Activated CD4-positive, alpha-beta T cell treated with anti-CD3 and anti-CD28 coated beads for 36 hours (primary cell): ENCODE measurements at regions of chr3 and their contacts with region 1.

Region 1: GRCh38 chr3:177314897-177315296 is 117.6 kb upstream of the TBL1XR1 start:
- DNase-seq: no peak
- ATAC-seq: peak; percentile 72
- H3K4me3 Mint-ChIP-seq: no peak overlapping the region
- H3K27ac Mint-ChIP-seq: no peak overlapping the region
- H3K4me1 Mint-ChIP-seq: peaks cover 23% of the 10 kb centered on the region
- H3K27me3 Mint-ChIP-seq: peaks cover 3% of the 10 kb centered on the region

Region 2: DNA sequence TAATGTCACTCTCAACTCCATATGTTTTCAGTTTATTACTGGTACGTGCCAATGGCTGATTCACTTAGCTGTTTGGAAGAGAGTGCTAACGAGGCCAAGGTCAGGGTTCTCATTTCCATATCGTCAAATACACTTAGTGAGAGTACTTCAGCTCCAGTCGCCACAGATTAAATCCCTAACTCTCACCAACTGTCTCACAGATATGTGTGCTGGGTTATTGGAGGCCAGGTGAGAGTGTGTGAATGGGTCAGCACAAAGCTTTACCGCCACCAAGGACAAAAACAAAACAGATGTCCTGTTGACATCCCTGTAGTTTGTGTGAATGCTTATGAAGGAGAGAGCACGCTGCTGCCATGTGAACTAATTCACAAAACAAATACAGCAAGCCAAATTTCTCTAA is 15.9 kb after region 1 on chr3:
- CTCF ChIA-PET with region 1: no interaction called
- POLR2A ChIA-PET with region 1: no interaction called
- intact Hi-C with region 1: no loop called
- DNase-seq: no peak
- ATAC-seq: no peak
- H3K4me3 Mint-ChIP-seq: no peak overlapping the region
- H3K27ac Mint-ChIP-seq: no peak overlapping the region
- H3K4me1 Mint-ChIP-seq: peaks cover 5% of the 10 kb centered on the region
- H3K27me3 Mint-ChIP-seq: peaks cover 5% of the 10 kb centered on the region

Region 3: GRCh38 chr3:177787279-177788041 is 472.6 kb after region 1 on chr3:
- CTCF ChIA-PET with region 1: no interaction called
- POLR2A ChIA-PET with region 1: no interaction called
- intact Hi-C with region 1: loop called in 1 of 2 experiments (anchors 5 kb)
- DNase-seq: peak; percentile 32
- ATAC-seq: peak; percentile 89
- H3K4me3 Mint-ChIP-seq: no peak overlapping the region
- H3K27ac Mint-ChIP-seq: peak overlapping the region; percentile 52
- H3K4me1 Mint-ChIP-seq: peaks cover 26% of the 10 kb centered on the region
- H3K27me3 Mint-ChIP-seq: no peaks in the 10 kb centered on the region